Panc1 (cell line): ENCODE measurements at regions of chr2 and their contacts with region 1.

Region 1: DNA sequence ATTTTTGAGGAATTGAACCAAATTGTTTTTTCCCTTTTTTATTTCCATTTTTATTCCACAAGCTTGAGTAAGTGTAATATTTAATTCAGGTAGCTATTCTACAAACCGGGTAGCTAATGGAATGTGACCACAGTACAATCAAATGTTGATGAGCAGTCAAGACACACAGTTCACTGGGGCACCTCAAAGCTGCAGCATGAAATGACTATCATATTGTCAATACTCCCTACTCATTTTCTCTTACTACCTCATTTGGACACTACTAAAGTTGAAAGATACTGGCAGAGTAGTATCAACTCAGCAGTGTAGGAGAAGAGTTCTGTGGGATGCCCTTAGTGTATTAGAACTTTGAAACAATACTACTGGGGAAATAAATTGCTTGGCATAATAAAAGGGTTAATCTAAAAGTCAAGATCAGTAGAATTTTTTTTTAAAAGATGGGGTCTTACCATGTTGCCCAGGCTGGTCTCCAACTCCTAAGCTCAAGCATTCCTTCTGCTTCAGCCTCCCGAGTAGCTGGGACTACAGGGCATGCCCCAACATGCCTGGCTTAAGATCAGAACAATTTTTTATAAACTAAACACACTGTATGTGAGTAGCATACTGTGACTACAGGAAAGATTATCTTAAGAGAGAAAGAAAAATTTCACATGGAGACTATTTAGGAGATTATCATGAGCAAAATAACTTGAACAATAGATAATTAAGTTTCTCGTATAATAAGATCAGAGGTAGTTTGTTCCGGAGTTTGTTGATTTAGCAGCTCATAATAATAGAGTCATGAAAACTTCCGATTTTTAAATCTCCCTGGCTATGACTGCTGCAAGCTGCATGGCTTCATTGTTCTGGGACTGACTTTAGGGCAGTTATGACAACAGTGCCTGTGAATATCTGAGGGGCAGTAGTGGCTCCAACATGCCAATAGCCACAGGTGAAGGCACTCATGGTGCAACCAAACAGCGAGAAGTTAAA is 43.7 kb downstream of the MYO3B start:
- DNase-seq: no peak
- ATAC-seq: no peak
- H3K4me3 ChIP-seq: no peak overlapping the region
- H3K27ac ChIP-seq: no peak overlapping the region
- H3K4me1 ChIP-seq: no peaks in the 10 kb centered on the region; the same call in 1 of the 2 replicates
- H3K27me3 ChIP-seq: no peaks in the 10 kb centered on the region
- CTCF ChIP-seq: no peak

Region 2: GRCh38 chr2:169945515-169945914 is 276.1 kb before region 1 on chr2:
- CTCF ChIA-PET with region 1: no interaction called
- POLR2A ChIA-PET with region 1: no interaction called
- in situ Hi-C with region 1: no loop called
- intact Hi-C with region 1: loop called (anchors 10 kb)
- DNase-seq: no peak
- ATAC-seq: no peak
- H3K4me3 ChIP-seq: no peak overlapping the region
- H3K27ac ChIP-seq: no peak overlapping the region
- H3K4me1 ChIP-seq: no peaks in the 10 kb centered on the region; the same call in 1 of the 2 replicates
- H3K27me3 ChIP-seq: no peaks in the 10 kb centered on the region
- CTCF ChIP-seq: no peak